Caco-2 (cell line): ENCODE measurements at regions of chr7 and their contacts with region 1.

Region 1: GRCh38 chr7:107966711-107967110 is 36.2 kb downstream of the LAMB1 start:
- DNase-seq: peak; percentile 55 to 61
- H3K4me3 ChIP-seq: no peak overlapping the region
- H3K4me3 Mint-ChIP-seq: no peak overlapping the region
- H3K27ac Mint-ChIP-seq: no peak overlapping the region
- H3K4me1 ChIP-seq: peaks cover 43% of the 10 kb centered on the region
- H3K4me1 Mint-ChIP-seq: no peaks in the 10 kb centered on the region
- H3K27me3 ChIP-seq: no peaks in the 10 kb centered on the region
- H3K27me3 Mint-ChIP-seq: no peaks in the 10 kb centered on the region
- CTCF ChIP-seq: peak in 1 of 2 experiments; percentile 1

Region 2: DNA sequence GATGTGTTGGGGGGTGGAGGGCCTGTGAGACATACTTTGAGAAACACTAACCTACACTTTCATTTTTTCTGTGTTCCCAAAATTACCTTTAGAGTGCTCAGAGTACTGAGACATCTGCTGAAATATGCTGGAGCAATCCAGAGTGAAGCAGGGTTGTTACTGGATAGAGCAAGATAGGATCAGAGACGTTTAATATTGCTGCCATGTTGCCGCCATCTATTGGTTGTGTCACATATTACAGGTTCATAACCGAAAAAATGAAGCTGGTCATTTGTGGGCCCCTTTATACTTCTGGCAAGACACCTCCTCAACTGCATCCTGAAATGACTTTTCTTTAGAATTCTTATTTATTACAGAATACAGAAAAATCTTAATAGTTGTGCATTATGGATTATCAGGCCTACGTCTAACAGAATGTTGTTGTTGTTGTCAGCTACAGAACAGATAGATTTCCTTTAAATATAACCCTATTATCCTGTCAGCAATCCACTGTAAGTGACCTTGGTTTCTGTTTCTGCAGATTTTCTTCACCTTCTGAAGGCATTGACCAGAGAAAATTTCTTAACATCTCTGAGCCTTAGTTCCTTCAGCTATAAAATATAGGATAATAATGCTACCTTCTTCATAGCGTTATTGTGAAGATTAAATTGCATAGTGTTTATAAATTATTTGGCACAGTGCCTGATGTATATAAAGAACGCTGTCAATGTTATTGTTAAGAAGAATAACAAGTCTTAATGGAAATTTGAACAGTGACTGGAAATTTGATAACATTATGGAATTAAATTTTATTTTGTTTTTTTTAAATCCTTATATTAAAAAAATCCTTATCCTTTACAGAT is 91.9 kb before region 1 on chr7:
- CTCF ChIA-PET with region 1: no interaction called
- POLR2A ChIA-PET with region 1: no interaction called
- intact Hi-C with region 1: no loop called
- DNase-seq: peak; percentile 51 to 71
- H3K4me3 ChIP-seq: no peak overlapping the region
- H3K4me3 Mint-ChIP-seq: no peak overlapping the region
- H3K27ac Mint-ChIP-seq: no peak overlapping the region
- H3K4me1 ChIP-seq: no peaks in the 10 kb centered on the region
- H3K4me1 Mint-ChIP-seq: peaks cover 6% of the 10 kb centered on the region
- H3K27me3 ChIP-seq: no peaks in the 10 kb centered on the region
- H3K27me3 Mint-ChIP-seq: peaks cover 2% of the 10 kb centered on the region
- CTCF ChIP-seq: peak; percentile 68 to 71

Region 3: GRCh38 chr7:107995184-107996071 is 28.7 kb after region 1 on chr7:
- CTCF ChIA-PET with region 1: no interaction called
- POLR2A ChIA-PET with region 1: no interaction called
- intact Hi-C with region 1: loop called (anchors 1 kb)
- DNase-seq: peak; percentile 80 to 82
- H3K4me3 ChIP-seq: no peak overlapping the region
- H3K4me3 Mint-ChIP-seq: peak overlapping the region; percentile 69
- H3K27ac Mint-ChIP-seq: peak overlapping the region; percentile 86
- H3K4me1 ChIP-seq: peaks cover 62% of the 10 kb centered on the region
- H3K4me1 Mint-ChIP-seq: peaks cover 27% of the 10 kb centered on the region
- H3K27me3 ChIP-seq: no peaks in the 10 kb centered on the region
- H3K27me3 Mint-ChIP-seq: no peaks in the 10 kb centered on the region
- CTCF ChIP-seq: no peak

Region 4: DNA sequence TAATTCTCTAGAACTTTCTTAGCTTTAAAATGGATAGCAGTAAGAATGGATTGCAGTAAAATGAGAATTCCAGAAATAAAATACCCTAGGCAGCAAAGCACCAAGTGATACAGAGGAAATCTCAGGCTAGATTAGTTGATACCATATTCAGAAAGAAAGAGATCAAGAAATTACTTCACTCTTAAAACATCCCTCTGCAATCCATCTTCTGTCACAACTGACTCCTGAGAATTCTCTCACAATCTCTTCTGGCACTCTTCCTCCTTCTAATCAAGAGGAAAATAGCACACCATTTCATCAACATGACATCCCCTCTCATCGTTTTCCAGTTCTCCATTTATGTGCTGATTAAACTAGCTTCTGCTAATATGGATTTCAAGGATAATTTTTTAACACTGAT is 78.4 kb after region 1 on chr7:
- CTCF ChIA-PET with region 1: no interaction called
- POLR2A ChIA-PET with region 1: no interaction called
- intact Hi-C with region 1: no loop called
- DNase-seq: no peak
- H3K4me3 ChIP-seq: no peak overlapping the region
- H3K4me3 Mint-ChIP-seq: no peak overlapping the region
- H3K27ac Mint-ChIP-seq: no peak overlapping the region
- H3K4me1 ChIP-seq: peaks cover 40% of the 10 kb centered on the region
- H3K4me1 Mint-ChIP-seq: peaks cover 44% of the 10 kb centered on the region
- H3K27me3 ChIP-seq: no peaks in the 10 kb centered on the region
- H3K27me3 Mint-ChIP-seq: no peaks in the 10 kb centered on the region
- CTCF ChIP-seq: no peak